Naive thymus-derived CD4-positive, alpha-beta T cell (primary cell): ENCODE measurements at regions of chr12 and their contacts with region 1.

Region 1: GRCh38 chr12:121060149-121061001 is 21.3 kb upstream of the OASL start:
- DNase-seq: peak; percentile 28 to 78 (median 67)
- ATAC-seq: peak; percentile 97
- H3K4me3 ChIP-seq: peak overlapping the region; percentile 74
- H3K4me3 Mint-ChIP-seq: peak overlapping the region; percentile 73 to 91 (median 85)
- H3K27ac ChIP-seq: peak overlapping the region; percentile 56
- H3K27ac Mint-ChIP-seq: peak overlapping the region; percentile 75 to 98 (median 91)
- H3K4me1 ChIP-seq: peaks cover 7 to 11% of the 10 kb centered on the region in 2 donors
- H3K4me1 Mint-ChIP-seq: peaks cover 9 to 31% (median 17%) of the 10 kb centered on the region in 7 donors
- H3K27me3 ChIP-seq: no peaks in the 10 kb centered on the region
- H3K27me3 Mint-ChIP-seq: no peaks in the 10 kb centered on the region

Region 2: DNA sequence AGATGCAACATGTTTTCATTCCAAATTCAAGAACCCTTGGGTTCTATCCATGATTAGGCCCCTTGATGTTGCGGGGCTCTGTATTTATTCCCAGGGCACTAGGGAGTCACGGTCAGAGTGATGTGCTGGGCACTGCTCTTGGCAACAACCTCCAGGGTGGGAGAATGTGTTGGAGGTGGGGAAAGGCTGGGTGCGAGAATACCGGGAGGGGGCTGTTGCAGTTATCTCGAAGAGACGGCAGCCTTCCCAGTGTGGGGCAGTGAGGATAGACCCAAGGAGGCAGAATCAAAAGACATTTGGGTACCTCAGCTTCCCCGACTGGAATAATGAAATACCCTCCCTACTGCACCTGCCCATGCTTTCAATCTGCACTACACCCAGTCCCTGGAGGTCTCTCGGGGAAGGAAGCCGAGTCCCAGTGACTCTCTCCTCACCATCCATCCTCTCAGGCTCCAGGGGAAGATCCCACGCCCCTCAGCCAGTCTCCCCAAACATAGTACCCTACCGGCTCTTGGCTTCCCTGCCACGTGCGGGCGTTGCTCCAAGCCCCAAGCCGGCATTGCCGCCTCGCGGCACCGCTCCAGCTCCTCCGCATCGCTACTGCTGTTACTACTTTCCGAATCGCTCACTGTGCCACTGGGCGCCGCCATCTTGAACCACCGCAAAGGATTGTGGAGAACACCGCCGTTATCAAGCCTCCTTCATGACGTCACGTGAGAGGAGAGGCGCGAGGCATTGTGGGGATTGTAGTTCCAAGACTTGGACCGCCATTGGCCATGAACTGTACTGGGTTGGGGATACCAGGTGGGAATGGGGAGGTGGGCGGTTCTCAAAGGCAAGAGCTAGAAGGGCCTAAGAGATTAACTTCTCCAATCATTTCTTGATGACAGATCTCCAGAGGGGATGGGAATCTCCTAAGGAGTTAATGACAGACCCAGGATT is 44.3 kb before region 1 on chr12 and contains the start of gene C12orf43:
- CTCF ChIA-PET with region 1: no interaction called
- POLR2A ChIA-PET with region 1: interaction called, 3 read pairs
- intact Hi-C with region 1: loop called (anchors 1 kb)
- DNase-seq: peak; percentile 74 to 93 (median 89)
- ATAC-seq: peak; percentile 99
- H3K4me3 ChIP-seq: peak within 1 kb of the TSS; percentile 88
- H3K4me3 Mint-ChIP-seq: peak within 1 kb of the TSS; percentile 93 to 99 (median 96)
- H3K27ac ChIP-seq: peak within 1 kb of the TSS; percentile 88
- H3K27ac Mint-ChIP-seq: peak within 1 kb of the TSS; percentile 89 to 97 (median 95)
- H3K4me1 ChIP-seq: peaks cover 6 to 11% of the 10 kb centered on the region in 2 donors
- H3K4me1 Mint-ChIP-seq: peaks cover 17 to 32% (median 24%) of the 10 kb centered on the region in 7 donors
- H3K27me3 ChIP-seq: no peaks in the 10 kb centered on the region
- H3K27me3 Mint-ChIP-seq: no peaks in the 10 kb centered on the region
- total RNA-seq, gene C12orf43: 11.8 to 24.2 (median 17.5) TPM

Region 3: DNA sequence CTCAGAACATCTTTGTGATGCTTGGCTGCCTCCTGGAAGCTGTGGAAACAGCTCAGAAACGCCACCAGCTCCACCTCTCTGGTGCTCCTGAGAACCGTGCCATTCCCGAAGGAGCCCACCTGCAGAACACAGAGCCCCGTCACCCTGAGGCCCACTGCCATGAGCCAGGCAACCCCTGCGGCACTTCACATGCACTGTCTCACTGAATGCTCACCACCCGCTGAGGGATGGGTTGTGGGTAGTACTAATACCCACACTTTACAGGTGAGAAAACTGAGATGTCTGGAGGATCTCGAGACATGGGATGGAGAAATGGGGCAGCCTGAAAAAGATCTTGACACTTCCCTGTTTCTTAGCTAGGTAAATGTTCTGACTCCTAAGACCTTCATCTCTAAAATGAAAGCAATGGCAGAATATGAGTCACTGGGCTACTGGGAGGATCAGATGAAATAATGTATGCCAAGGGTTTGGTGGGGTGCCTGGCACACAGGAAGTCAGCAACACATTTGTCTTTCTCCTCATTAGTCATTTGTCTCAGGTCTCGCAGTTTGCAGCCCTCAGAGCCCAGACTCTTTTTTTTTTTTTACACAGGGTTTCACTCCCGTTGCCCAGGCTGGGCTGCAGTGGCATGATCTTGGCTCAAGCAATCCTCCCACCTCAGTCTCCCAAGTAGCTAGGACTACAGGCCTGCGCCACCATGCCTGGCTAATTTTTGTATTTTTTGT is 26.6 kb before region 1 on chr12:
- CTCF ChIA-PET with region 1: interaction called, 9 read pairs
- POLR2A ChIA-PET with region 1: interaction called, 4 read pairs
- intact Hi-C with region 1: loop called (anchors 1 kb)
- DNase-seq: peak in 3 of 9 donors; percentile 13 to 43 (median 16)
- ATAC-seq: peak; percentile 81
- H3K4me3 ChIP-seq: peak overlapping the region; percentile 26
- H3K4me3 Mint-ChIP-seq: peak overlapping the region in 8 of 10 donors; percentile 5 to 72 (median 28)
- H3K27ac ChIP-seq: no peak overlapping the region
- H3K27ac Mint-ChIP-seq: peak overlapping the region in 8 of 9 donors; percentile 59 to 93 (median 82)
- H3K4me1 ChIP-seq: peaks cover 48 to 51% of the 10 kb centered on the region in 2 donors
- H3K4me1 Mint-ChIP-seq: peaks cover 29 to 52% (median 44%) of the 10 kb centered on the region in 7 donors
- H3K27me3 ChIP-seq: no peaks in the 10 kb centered on the region
- H3K27me3 Mint-ChIP-seq: no peaks in the 10 kb centered on the region

Region 4: DNA sequence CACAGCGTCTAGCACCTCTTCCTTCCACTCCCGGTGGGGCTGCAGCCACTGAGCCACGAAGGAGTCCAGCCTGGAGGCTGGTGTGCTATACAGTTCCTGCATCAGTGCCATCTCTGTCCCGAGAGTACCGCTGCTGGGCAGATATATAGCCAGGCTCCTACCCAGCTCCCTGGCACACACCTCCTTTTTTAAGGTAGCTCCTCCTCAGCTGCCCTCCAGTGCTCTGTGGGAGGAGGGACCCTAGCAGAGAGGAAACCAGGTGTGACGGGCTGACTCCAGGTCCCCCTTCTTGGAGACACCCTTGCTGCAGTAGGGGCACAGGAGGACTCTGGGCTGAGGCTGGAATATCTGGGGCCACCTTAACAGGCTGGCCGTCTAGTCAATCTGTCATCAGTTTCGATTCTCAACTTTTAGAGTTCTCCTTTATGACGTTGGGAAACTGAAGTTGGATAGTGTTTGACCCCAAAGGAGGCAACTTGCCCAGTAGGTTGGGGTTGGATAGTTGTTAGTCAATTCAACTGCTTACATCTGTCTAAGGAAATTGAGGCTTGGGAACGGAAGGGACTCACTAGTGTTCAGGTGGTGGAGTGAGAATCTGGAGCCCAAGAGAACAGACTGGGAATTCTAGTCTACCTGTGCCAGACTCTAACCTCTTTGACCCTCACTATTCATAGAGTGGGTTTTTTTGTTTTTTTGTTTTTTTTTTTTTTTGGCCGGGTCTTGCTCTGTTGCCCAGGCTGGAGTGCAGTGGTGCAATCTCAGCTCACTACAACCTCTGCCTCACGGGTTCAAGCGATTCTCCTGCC is 21.3 kb before region 1 on chr12 and contains the start of gene OASL:
- CTCF ChIA-PET with region 1: interaction called, 9 read pairs
- POLR2A ChIA-PET with region 1: interaction called, 4 read pairs
- intact Hi-C with region 1: loop called (anchors 1 kb)
- DNase-seq: peak; percentile 31 to 50 (median 43)
- ATAC-seq: peak; percentile 84
- H3K4me3 ChIP-seq: peak within 1 kb of the TSS; percentile 70
- H3K4me3 Mint-ChIP-seq: peak within 1 kb of the TSS; percentile 89 to 99 (median 96)
- H3K27ac ChIP-seq: peak within 1 kb of the TSS; percentile 68
- H3K27ac Mint-ChIP-seq: peak within 1 kb of the TSS; percentile 91 to 98 (median 95)
- H3K4me1 ChIP-seq: peaks cover 42 to 43% of the 10 kb centered on the region in 2 donors
- H3K4me1 Mint-ChIP-seq: peaks cover 27 to 49% (median 42%) of the 10 kb centered on the region in 7 donors
- H3K27me3 ChIP-seq: no peaks in the 10 kb centered on the region
- H3K27me3 Mint-ChIP-seq: peaks cover 0 to 18% (median 0%) of the 10 kb centered on the region in 5 donors
- total RNA-seq, gene OASL: 2.7 to 19.4 (median 4.3) TPM

Region 5: GRCh38 chr12:121223292-121224285 is 163.2 kb after region 1 on chr12:
- CTCF ChIA-PET with region 1: no interaction called
- POLR2A ChIA-PET with region 1: interaction called, 5 read pairs
- intact Hi-C with region 1: loop called (anchors 1 to 5 kb)
- DNase-seq: peak in 8 of 9 donors; percentile 21 to 56 (median 48)
- ATAC-seq: peak; percentile 68
- H3K4me3 ChIP-seq: peak overlapping the region; percentile 28
- H3K4me3 Mint-ChIP-seq: peak overlapping the region; percentile 48 to 91 (median 72)
- H3K27ac ChIP-seq: peak overlapping the region; percentile 56
- H3K27ac Mint-ChIP-seq: peak overlapping the region; percentile 92 to 98 (median 95)
- H3K4me1 ChIP-seq: peaks cover 16 to 48% of the 10 kb centered on the region in 2 donors
- H3K4me1 Mint-ChIP-seq: peaks cover 23 to 57% (median 49%) of the 10 kb centered on the region in 7 donors
- H3K27me3 ChIP-seq: no peaks in the 10 kb centered on the region
- H3K27me3 Mint-ChIP-seq: no peaks in the 10 kb centered on the region